ENCODE measurements at regions of chr5 and their contacts with region 1.

Region 1: GRCh38 chr5:19531374-19531952 is 456.5 kb downstream of the CDH18 start:
- DNase-seq: peak; percentile 92 to 94
- H3K4me3 ChIP-seq: peak overlapping the region; percentile 27; the same call in 1 of the 2 replicates
- H3K27ac ChIP-seq: peak overlapping the region; percentile 92
- H3K4me1 ChIP-seq: peaks cover 19% of the 10 kb centered on the region
- H3K27me3 ChIP-seq: no peaks in the 10 kb centered on the region
- CTCF ChIP-seq: no peak

Region 2: DNA sequence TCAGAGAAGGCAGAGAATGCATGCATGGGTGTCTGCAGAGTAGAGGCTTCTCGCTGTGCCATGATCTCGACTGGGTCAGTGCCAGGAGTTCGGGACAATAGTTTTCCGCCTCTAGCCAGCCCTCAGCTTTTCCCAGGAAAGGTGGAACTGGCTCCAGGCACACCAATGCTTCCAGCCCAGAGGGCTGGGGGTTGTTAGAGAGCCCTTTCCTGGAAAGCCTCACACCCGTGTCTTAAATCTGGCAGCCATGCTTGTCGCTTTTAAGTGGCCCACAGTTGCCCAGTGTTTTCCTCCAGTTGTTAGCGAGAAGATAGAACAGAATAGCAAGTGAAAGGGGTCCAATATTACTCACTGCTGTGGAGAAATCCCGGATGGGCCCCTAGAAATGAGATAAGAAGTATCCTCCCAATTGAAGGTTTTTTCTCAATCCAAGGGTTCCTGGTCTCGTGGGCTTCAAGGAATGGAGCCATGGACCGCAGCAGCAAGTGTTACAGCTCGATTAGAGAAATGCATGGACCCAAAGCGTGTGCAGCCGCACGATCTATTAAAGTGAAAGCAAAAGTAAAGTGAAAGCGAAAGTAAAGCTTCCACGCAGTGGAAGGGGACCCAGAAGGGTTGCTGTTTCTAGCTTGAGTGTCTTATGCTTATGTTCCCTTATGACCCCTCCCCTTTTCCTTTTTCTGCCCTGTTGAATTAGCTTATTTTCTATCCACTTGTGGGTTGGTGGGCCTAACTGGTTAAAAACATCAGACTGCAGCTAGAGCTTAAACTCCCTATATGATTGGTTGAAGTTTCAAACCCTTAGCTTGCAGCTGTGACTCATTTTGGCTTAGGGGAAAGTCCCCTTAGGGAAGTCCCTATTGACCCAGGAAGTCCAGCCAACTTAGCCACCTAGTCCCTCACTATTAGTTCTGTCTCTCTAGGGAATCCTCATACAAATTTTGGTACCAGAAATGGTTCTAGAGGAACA is 785.5 kb before region 1 on chr5:
- CTCF ChIA-PET with region 1: no interaction called
- POLR2A ChIA-PET with region 1: no interaction called
- intact Hi-C with region 1: loop called (anchors 10 kb)
- DNase-seq: peak; percentile 63 to 73
- H3K4me3 ChIP-seq: peak overlapping the region; percentile 75
- H3K27ac ChIP-seq: peak overlapping the region; percentile 21
- H3K4me1 ChIP-seq: peaks cover 7% of the 10 kb centered on the region
- H3K27me3 ChIP-seq: no peaks in the 10 kb centered on the region
- CTCF ChIP-seq: no peak

Region 3: GRCh38 chr5:19192180-19192579 is 339.3 kb before region 1 on chr5:
- CTCF ChIA-PET with region 1: no interaction called
- POLR2A ChIA-PET with region 1: no interaction called
- intact Hi-C with region 1: loop called (anchors 5 kb)
- DNase-seq: no peak
- H3K4me3 ChIP-seq: no peak overlapping the region
- H3K27ac ChIP-seq: no peak overlapping the region
- H3K4me1 ChIP-seq: no peaks in the 10 kb centered on the region
- H3K27me3 ChIP-seq: no peaks in the 10 kb centered on the region
- CTCF ChIP-seq: no peak

Region 4: DNA sequence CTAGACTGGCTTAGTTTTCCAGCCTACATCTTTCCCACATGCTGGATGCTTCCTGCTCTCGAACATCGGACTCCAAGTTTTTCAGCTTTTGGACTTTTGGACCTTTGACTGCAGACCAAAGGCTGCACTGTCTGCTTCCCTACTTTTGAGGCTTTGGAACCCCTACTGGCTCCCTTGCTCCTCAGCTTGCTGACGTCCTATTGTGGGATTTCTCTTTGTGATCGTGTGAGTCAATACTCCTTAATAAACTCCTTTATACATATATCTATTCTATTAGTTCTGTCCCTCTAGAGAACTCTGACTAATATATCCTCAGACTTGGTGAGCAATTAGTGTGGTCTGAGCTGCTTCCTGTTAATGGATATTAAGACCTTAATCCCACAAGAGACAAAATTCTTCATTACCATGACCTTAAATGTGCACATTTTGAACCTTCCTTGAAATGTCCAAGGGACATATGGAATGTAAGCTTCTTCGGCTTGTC is 296.3 kb before region 1 on chr5:
- CTCF ChIA-PET with region 1: no interaction called
- POLR2A ChIA-PET with region 1: interaction called, 6 read pairs
- intact Hi-C with region 1: loop called (anchors 5 kb)
- DNase-seq: no peak
- H3K4me3 ChIP-seq: no peak overlapping the region
- H3K27ac ChIP-seq: no peak overlapping the region
- H3K4me1 ChIP-seq: no peaks in the 10 kb centered on the region
- H3K27me3 ChIP-seq: no peaks in the 10 kb centered on the region
- CTCF ChIP-seq: no peak

Region 5: GRCh38 chr5:19314851-19315327 is 216.6 kb before region 1 on chr5:
- CTCF ChIA-PET with region 1: no interaction called
- POLR2A ChIA-PET with region 1: interaction called, 8 read pairs
- intact Hi-C with region 1: loop called (anchors 1 kb)
- DNase-seq: peak; percentile 65 to 87
- H3K4me3 ChIP-seq: no peak overlapping the region
- H3K27ac ChIP-seq: no peak overlapping the region
- H3K4me1 ChIP-seq: 0 out of 2 replicates have a peak, but pooled peaks cover 5% of the 10 kb centered on the region
- H3K27me3 ChIP-seq: no peaks in the 10 kb centered on the region
- CTCF ChIP-seq: peak; percentile 38; the same call in 1 of the 2 replicates

Region 6: DNA sequence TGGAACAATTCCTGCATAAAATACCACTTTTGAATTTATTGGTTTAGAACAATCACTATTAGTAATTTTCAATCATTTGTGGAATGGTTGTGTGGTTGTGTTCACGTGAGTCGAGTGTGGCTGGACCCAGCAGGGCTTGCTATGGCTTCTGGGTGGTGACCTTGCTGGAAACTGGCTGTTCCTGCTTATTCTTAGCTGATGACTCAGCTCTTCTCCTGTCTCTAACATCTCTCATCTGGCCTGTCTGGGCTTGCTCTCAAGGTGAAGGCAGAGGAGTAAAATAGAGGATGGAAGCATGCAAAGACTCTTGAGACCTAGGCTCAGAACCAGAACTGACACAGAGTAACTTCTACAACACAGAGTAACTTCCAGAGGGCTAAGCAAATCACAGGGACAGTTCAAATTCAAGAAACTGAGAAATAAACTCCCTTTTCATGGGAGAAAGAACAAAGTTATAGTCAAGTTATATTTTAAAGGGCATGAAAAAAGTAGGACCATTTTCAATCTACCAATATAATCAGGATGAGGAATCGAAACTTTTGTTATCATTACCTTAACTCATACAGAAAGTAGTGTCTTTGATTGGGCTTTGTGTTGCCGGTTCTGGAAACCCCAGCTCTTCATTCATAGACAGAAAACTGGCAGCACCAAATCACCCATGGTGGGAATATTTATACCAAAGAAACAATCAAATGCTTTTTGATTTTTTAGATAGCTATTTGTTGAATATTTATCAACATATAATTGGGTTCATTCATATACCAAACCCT is 208.6 kb before region 1 on chr5:
- CTCF ChIA-PET with region 1: no interaction called
- POLR2A ChIA-PET with region 1: no interaction called
- intact Hi-C with region 1: loop called (anchors 1 kb)
- DNase-seq: peak; percentile 42 to 68
- H3K4me3 ChIP-seq: no peak overlapping the region
- H3K27ac ChIP-seq: no peak overlapping the region
- H3K4me1 ChIP-seq: peaks cover 9% of the 10 kb centered on the region
- H3K27me3 ChIP-seq: no peaks in the 10 kb centered on the region
- CTCF ChIP-seq: no peak